Cardiac septum (tissue), 1 donor: ENCODE measurements at regions of chr17 and their contacts with region 1.

Region 1: DNA sequence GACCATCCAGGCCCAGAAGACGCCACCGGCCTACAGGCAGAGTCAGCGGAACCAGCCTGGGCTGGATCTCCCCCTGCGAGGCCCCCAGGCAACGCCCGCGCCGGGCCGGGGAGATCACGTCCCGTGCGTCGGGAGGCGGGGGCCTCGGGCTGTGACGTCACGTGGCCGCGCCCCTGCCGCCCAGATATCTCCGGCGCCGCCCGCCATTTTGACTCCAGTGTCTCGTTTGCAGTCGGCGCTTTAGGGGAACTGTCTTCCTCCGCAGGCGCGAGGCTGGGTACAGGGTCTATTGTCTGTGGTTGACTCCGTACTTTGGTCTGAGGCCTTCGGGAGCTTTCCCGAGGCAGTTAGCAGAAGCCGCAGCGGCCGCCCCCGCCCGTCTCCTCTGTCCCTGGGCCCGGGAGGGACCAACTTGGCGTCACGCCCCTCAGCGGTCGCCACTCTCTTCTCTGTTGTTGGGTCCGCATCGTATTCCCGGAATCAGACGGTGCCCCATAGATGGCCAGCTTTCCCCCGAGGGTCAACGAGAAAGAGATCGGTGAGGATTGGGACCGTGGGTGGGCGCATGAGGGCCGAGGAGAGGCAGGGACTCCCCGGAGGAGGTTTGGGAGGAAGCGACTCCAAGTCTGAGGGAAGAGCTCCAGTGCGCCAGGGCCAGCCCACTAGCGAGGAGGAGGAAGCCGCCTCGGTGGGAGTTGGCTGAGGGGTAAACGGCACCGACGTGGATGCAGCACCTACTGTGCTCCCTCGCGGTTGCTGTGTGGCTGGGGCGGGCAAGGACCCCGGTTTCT is at the start of gene WSB1:
- DNase-seq: peak; percentile 98
- total RNA-seq, gene WSB1: 94.1 TPM

Region 2: GRCh38 chr17:27106347-27106981 is 187.6 kb before region 1 on chr17:
- intact Hi-C with region 1: no loop called
- DNase-seq: no peak

Region 3: GRCh38 chr17:27153005-27153404 is 141.1 kb before region 1 on chr17:
- intact Hi-C with region 1: no loop called
- DNase-seq: no peak

Region 4: GRCh38 chr17:27245230-27245696 is 48.8 kb before region 1 on chr17:
- intact Hi-C with region 1: loop called (anchors 2 kb)
- DNase-seq: peak; percentile 92

Region 5: DNA sequence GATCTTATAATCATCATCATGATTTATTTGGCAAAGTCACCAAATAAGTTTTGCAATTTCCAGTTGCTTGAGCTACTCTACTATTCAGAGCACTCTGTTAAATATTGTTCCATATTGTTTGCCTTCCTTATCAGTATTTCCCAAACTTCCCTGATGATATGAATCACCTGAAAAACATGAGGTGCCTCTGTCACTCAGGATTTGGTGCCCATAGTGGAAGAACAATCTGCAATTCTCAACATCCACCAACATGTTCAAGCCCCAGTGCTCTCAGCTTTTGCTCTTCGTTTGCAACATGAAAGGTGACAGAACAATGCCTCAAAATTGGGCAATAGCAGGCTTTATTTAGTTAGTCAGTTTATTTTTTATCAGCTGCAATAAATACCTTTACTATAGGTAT is 28.8 kb before region 1 on chr17:
- intact Hi-C with region 1: no loop called
- DNase-seq: no peak

Region 6: DNA sequence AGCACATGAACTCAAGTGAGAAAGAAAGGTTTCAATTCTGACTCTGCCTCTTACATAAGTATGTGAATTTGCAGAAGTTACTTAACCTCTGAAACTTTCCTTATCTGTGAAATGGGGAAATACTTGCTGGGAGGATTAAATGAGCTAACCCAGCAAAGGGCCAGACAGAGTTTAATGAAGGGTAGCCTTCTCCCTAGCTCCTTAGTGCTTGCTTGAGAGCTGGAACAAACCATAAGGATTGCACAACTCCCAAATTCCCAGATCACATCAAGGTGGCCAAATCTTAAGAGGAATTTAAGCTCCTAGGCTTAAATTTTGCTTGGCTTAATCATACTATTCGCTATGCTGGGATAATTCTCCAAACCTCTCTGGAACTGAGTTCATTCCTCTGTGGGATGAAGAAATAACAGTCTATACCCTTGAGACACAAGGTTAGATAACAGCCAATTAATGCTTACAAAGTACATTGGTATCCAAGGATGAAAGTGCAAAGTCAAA is 12.0 kb before region 1 on chr17:
- intact Hi-C with region 1: no loop called
- DNase-seq: no peak

Region 7: GRCh38 chr17:27332485-27333409 is 38.7 kb after region 1 on chr17:
- intact Hi-C with region 1: loop called (anchors 1 kb)
- DNase-seq: peak; percentile 99

Region 8: GRCh38 chr17:27381007-27381501 is 87.0 kb after region 1 on chr17:
- intact Hi-C with region 1: loop called (anchors 5 kb)
- DNase-seq: peak; percentile 86